ENCODE measurements at regions of chr15 and their contacts with region 1.

Region 1: GRCh38 chr15:58378254-58379085 is 53.3 kb upstream of the LIPC start:
- DNase-seq: no peak
- ATAC-seq: no peak
- H3K4me3 ChIP-seq: no peak overlapping the region
- H3K27ac ChIP-seq: no peak overlapping the region
- H3K4me1 ChIP-seq: no peaks in the 10 kb centered on the region
- H3K27me3 ChIP-seq: no peaks in the 10 kb centered on the region
- CTCF ChIP-seq: no peak

Region 2: GRCh38 chr15:58551764-58552504 is 173.5 kb after region 1 on chr15:
- intact Hi-C with region 1: loop called in 1 of 10 experiments (anchors 10 kb)
- DNase-seq: no peak
- ATAC-seq: peak in 3 of 8 donors; percentile 3 to 38 (median 15)
- H3K4me3 ChIP-seq: peak overlapping the region in 5 of 10 donors; percentile 18 to 35 (median 24)
- H3K27ac ChIP-seq: peak overlapping the region in 2 of 10 donors; percentile 13 to 28
- H3K4me1 ChIP-seq: peaks cover 0 to 39% (median 15%) of the 10 kb centered on the region in 9 donors
- H3K27me3 ChIP-seq: no peaks in the 10 kb centered on the region
- CTCF ChIP-seq: no peak

Measured in heart right ventricle (tissue), 16 donors.